Posterior cingulate gyrus (tissue), 11 donors: ENCODE measurements at regions of chr14 and their contacts with region 1.

Region 1: DNA sequence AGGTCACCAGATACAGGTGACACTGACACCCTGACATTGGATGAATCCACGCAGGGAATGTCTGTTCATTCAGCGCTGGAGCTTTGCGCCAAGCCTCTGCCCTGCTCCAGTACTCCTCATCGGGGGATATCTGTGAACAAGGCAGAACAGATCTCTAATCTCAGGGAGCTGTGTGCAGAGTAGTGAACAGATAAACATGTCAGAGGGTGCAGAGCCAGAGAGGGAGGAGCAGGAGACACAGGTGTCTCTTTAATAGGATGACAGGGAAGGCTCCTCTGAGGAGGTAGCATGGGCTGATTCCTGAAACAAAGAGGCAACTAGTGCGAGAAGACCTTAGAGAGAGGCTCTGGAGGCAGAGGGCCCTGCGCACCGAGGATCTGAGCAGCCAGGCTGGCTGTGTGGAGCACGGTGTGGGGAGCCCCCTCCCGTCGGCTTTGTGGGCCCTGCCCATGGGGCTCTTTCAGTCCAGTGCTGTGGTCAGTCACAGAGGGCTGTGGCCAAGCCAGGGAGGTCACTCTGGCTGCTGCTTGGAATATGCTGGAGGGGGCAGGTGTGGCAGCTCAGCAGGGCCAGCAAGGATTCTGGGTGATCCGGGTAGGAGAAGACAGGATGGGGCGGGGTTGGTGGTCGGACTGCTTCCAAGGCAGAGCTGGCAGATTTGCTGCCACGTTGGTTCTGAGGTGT is 55.6 kb downstream of the TECPR2 start:
- DNase-seq: peak in 3 of 10 donors; percentile 66 to 92 (median 82)

Region 2: GRCh38 chr14:102362545-102363181 is 55.6 kb before region 1 on chr14 and contains the starts of genes CINP and TECPR2:
- intact Hi-C with region 1: loop called (anchors 5 kb)
- DNase-seq: peak; percentile 98 to 100 (median 100)